ENCODE measurements at regions of chr9 and their contacts with region 1.

Region 1: DNA sequence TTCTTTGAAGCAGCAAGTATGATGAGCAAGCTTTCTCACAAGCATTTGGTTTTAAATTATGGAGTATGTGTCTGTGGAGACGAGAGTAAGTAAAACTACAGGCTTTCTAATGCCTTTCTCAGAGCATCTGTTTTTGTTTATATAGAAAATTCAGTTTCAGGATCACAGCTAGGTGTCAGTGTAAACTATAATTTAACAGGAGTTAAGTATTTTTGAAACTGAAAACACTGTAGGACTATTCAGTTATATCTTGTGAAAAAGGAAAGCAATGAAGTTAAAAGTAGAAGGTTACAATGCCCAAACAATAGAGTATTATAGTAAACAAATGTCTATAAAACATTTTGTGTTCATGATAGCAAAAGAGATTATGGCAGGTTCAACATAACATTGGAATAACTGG is 88.6 kb downstream of the JAK2 start:
- DNase-seq: no peak
- ATAC-seq: no peak
- H3K4me3 ChIP-seq: no peak overlapping the region
- H3K4me3 Mint-ChIP-seq: no peak overlapping the region
- H3K27ac ChIP-seq: no peak overlapping the region
- H3K27ac Mint-ChIP-seq: peak overlapping the region in 1 of 9 donors; percentile 10
- H3K4me1 ChIP-seq: no peaks in the 10 kb centered on the region
- H3K4me1 Mint-ChIP-seq: peaks cover 0 to 26% (median 0%) of the 10 kb centered on the region in 7 donors
- H3K27me3 ChIP-seq: no peaks in the 10 kb centered on the region
- H3K27me3 Mint-ChIP-seq: no peaks in the 10 kb centered on the region

Region 2: GRCh38 chr9:4596165-4596922 is 477.4 kb before region 1 on chr9:
- CTCF ChIA-PET with region 1: no interaction called
- POLR2A ChIA-PET with region 1: no interaction called
- intact Hi-C with region 1: no loop called
- DNase-seq: peak in 7 of 9 donors; percentile 81 to 94 (median 91)
- ATAC-seq: peak; percentile 95
- H3K4me3 ChIP-seq: peak overlapping the region; percentile 13
- H3K4me3 Mint-ChIP-seq: peak overlapping the region; percentile 29 to 80 (median 68)
- H3K27ac ChIP-seq: peak overlapping the region; percentile 74
- H3K27ac Mint-ChIP-seq: peak overlapping the region; percentile 58 to 99 (median 97)
- H3K4me1 ChIP-seq: peaks cover 30 to 53% of the 10 kb centered on the region in 2 donors
- H3K4me1 Mint-ChIP-seq: peaks cover 32 to 76% (median 60%) of the 10 kb centered on the region in 7 donors
- H3K27me3 ChIP-seq: no peaks in the 10 kb centered on the region
- H3K27me3 Mint-ChIP-seq: peaks cover 0 to 5% (median 0%) of the 10 kb centered on the region in 5 donors

Region 3: DNA sequence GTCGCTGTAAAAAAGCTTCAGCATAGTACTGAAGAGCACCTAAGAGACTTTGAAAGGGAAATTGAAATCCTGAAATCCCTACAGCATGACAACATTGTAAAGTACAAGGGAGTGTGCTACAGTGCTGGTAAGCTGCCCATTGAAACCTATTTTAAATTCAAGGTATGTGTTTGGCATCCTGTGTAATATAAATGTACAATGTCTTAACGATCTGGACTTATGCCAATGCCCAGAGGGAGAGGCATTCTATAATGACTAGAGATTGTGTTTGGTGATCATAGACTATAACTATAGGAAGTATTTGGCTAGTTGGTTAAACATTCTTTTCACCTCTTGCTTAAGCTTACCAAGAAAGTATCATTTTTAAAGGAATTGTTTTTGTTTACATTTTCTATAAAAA is 16.0 kb after region 1 on chr9:
- CTCF ChIA-PET with region 1: no interaction called
- POLR2A ChIA-PET with region 1: no interaction called
- intact Hi-C with region 1: loop called in 1 of 2 experiments (anchors 2 kb)
- DNase-seq: no peak
- ATAC-seq: no peak
- H3K4me3 ChIP-seq: no peak overlapping the region
- H3K4me3 Mint-ChIP-seq: no peak overlapping the region
- H3K27ac ChIP-seq: no peak overlapping the region
- H3K27ac Mint-ChIP-seq: no peak overlapping the region
- H3K4me1 ChIP-seq: no peaks in the 10 kb centered on the region
- H3K4me1 Mint-ChIP-seq: no peaks in the 10 kb centered on the region
- H3K27me3 ChIP-seq: no peaks in the 10 kb centered on the region
- H3K27me3 Mint-ChIP-seq: no peaks in the 10 kb centered on the region

Region 4: DNA sequence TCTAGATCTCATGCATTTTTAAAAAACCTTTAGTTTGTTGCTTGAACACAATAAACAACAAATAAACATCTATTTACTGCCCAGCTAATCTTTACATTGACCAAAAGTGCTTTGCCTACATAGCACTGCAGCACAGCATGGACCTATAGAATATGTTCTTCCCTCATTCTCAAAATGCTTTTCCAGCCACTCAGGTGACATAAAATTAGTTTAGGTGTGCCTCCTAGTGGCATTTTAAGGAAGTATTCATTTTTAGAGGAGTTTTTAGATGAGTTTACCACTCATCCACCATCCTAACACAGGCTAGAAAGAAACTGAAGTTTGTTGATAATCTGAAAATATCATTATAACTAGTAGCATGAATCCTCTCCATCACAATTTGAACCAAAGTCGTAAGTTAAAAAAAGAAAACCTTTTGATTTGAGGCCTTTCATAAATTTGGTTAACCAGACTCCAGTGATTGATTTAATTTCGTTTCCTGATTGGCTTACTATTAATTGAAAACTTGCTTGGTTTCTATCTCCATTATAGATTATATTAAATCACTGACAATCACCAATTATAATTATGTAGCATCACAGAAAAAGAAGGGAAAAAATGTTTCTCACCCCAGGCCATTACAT is 351.4 kb after region 1 on chr9:
- CTCF ChIA-PET with region 1: no interaction called
- POLR2A ChIA-PET with region 1: no interaction called
- intact Hi-C with region 1: loop called in 1 of 2 experiments (anchors 5 kb)
- DNase-seq: peak in 6 of 9 donors; percentile 20 to 54 (median 43)
- ATAC-seq: peak; percentile 68
- H3K4me3 ChIP-seq: no peak overlapping the region
- H3K4me3 Mint-ChIP-seq: no peak overlapping the region
- H3K27ac ChIP-seq: no peak overlapping the region
- H3K27ac Mint-ChIP-seq: no peak overlapping the region
- H3K4me1 ChIP-seq: no peaks in the 10 kb centered on the region
- H3K4me1 Mint-ChIP-seq: peaks cover 0 to 15% (median 6%) of the 10 kb centered on the region in 7 donors
- H3K27me3 ChIP-seq: no peaks in the 10 kb centered on the region
- H3K27me3 Mint-ChIP-seq: no peaks in the 10 kb centered on the region

Region 5: DNA sequence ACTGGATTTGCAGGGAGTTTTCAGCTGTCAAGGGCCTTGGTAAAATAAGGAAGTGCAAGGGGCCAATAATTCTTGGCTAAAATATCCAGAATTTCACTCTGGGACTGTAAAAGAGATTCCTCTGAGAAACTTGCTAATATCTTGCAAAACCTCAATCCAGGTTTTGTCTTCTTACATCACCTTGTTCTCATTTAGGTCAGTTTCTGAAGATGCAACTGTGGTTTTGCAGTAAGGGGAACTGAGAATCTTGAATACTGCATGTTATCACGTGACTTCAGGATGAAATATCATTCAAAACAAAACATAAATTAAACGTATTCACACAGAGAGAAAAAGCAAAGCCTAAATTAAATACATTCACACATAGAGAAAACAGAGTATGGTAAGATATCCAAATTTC is 520.2 kb after region 1 on chr9:
- CTCF ChIA-PET with region 1: no interaction called
- POLR2A ChIA-PET with region 1: no interaction called
- intact Hi-C with region 1: loop called in 1 of 2 experiments (anchors 5 kb)
- DNase-seq: no peak
- ATAC-seq: no peak
- H3K4me3 ChIP-seq: no peak overlapping the region
- H3K4me3 Mint-ChIP-seq: no peak overlapping the region
- H3K27ac ChIP-seq: no peak overlapping the region
- H3K27ac Mint-ChIP-seq: peak overlapping the region in 2 of 9 donors; percentile 46 to 47
- H3K4me1 ChIP-seq: no peaks in the 10 kb centered on the region
- H3K4me1 Mint-ChIP-seq: peaks cover 4 to 28% (median 11%) of the 10 kb centered on the region in 7 donors
- H3K27me3 ChIP-seq: no peaks in the 10 kb centered on the region
- H3K27me3 Mint-ChIP-seq: peaks cover 0 to 7% (median 0%) of the 10 kb centered on the region in 5 donors

Region 6: GRCh38 chr9:5608298-5609225 is 534.9 kb after region 1 on chr9:
- CTCF ChIA-PET with region 1: no interaction called
- POLR2A ChIA-PET with region 1: no interaction called
- intact Hi-C with region 1: loop called in 1 of 2 experiments (anchors 5 kb)
- DNase-seq: peak in 3 of 9 donors; percentile 8 to 23 (median 21)
- ATAC-seq: peak; percentile 55
- H3K4me3 ChIP-seq: peak overlapping the region; percentile 39
- H3K4me3 Mint-ChIP-seq: peak overlapping the region; percentile 69 to 88 (median 82)
- H3K27ac ChIP-seq: peak overlapping the region; percentile 47
- H3K27ac Mint-ChIP-seq: peak overlapping the region; percentile 53 to 93 (median 86)
- H3K4me1 ChIP-seq: peaks cover 0 to 6% of the 10 kb centered on the region in 2 donors
- H3K4me1 Mint-ChIP-seq: peaks cover 7 to 51% (median 42%) of the 10 kb centered on the region in 7 donors
- H3K27me3 ChIP-seq: no peaks in the 10 kb centered on the region
- H3K27me3 Mint-ChIP-seq: no peaks in the 10 kb centered on the region